ENCODE measurements at regions of chr1 and their contacts with region 1.

Region 1: DNA sequence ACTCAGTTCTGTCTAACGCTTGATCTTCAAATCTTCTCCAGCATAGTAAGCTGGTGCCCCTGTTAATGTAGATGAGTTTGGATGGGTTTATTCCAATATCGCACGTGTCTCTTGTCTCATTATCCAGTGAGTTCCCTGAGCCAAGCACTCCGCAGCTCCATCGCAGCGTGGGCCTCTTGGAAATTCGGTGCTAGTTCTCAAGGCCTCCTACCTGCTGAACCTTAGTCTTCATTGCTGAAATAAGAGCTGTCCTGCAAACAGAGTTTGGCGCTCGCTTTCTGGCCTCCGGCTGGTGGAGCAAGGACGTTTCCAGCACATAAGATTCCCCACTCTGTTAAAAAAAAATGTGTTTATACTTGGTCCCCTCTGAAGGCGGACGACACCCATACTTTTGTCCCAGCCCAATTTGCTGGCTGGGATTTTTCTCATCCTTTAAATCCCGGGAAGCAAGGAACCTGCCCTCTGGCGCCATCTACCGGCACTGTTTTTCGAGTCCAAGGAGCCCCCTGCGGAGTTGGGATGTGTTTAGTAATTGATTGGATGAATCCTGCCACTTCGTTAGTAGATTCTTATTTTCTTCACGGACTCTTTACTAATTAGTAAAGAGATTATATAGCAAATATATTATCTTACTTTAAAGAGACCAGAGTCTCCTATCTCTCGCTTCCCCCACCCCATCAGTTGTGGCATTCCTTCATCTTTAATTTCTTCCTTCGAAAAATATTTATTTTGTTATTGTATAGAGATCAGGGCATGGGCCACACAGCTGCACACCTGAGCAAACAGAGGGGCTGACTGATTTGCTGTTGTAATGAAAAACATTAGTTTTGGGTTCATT is 14.7 kb downstream of the JUN start:
- DNase-seq: no peak
- H3K4me3 ChIP-seq: no peak overlapping the region
- CTCF ChIP-seq: peak; percentile 76

Region 2: GRCh38 chr1:58515794-58516401 is 253.3 kb before region 1 on chr1:
- CTCF ChIA-PET with region 1: no interaction called
- POLR2A ChIA-PET with region 1: no interaction called
- DNase-seq: peak; percentile 41
- H3K4me3 ChIP-seq: no peak overlapping the region
- CTCF ChIP-seq: peak; percentile 39

Region 3: DNA sequence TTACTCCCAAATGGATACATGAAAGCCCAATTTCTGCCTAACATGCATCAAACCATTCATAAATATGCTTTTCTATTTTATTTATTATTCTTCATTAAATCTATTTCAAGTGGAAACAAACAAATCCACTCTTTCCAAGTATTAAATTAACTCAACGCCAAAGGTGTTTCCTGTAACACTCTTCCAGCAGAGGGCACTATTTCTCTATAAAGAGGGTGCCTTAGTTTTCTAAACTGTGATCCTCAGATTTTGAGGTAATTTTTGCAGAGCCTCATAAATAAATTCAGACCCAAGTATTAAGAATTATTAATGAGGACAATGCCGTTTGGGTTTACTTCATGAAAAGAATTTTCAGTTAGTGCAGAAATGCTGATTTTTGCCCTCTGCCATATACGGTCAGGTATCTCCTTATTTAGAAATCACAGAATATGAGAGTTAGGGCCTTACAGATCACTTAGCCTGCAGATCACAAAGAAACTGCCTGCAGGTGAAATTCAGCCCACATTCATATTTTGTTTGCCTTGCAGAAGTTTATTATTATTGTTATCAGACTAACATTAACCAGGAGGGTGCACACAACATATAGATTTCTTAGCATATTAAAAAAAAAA is 29.2 kb before region 1 on chr1:
- CTCF ChIA-PET with region 1: interaction called, 71 read pairs
- POLR2A ChIA-PET with region 1: no interaction called
- DNase-seq: no peak
- H3K4me3 ChIP-seq: no peak overlapping the region
- CTCF ChIP-seq: peak; percentile 32

Region 4: GRCh38 chr1:58745666-58746065 is 23.5 kb before region 1 on chr1:
- CTCF ChIA-PET with region 1: interaction called, 71 read pairs
- POLR2A ChIA-PET with region 1: no interaction called
- DNase-seq: no peak
- H3K4me3 ChIP-seq: no peak overlapping the region
- CTCF ChIP-seq: no peak

Region 5: GRCh38 chr1:58755468-58755872 is 13.7 kb before region 1 on chr1:
- CTCF ChIA-PET with region 1: interaction called, 58 read pairs
- POLR2A ChIA-PET with region 1: interaction called, 17 read pairs
- DNase-seq: peak; percentile 98
- H3K4me3 ChIP-seq: no peak overlapping the region
- CTCF ChIP-seq: no peak